ENCODE measurements at regions of chr10 and their contacts with region 1.

Region 1: GRCh38 chr10:95907456-95908253 is at the start of gene CC2D2B:
- DNase-seq: peak; percentile 46 to 63 (median 55)
- H3K4me3 ChIP-seq: peak within 1 kb of the TSS; percentile 73 to 86
- H3K4me3 Mint-ChIP-seq: peak within 1 kb of the TSS; percentile 91 to 96 (median 93)
- H3K27ac ChIP-seq: peak within 1 kb of the TSS; percentile 58
- H3K27ac Mint-ChIP-seq: peak within 1 kb of the TSS; percentile 76 to 91 (median 88)
- H3K4me1 ChIP-seq: no peaks in the 10 kb centered on the region
- H3K4me1 Mint-ChIP-seq: peaks cover 8 to 15% (median 12%) of the 10 kb centered on the region in 4 donors
- H3K27me3 ChIP-seq: no peaks in the 10 kb centered on the region
- H3K27me3 Mint-ChIP-seq: no peaks in the 10 kb centered on the region
- total RNA-seq, gene CC2D2B: 0.15 TPM in 1 of 2 experiments, not detected in the other

Region 2: GRCh38 chr10:95561182-95562075 is 346.2 kb before region 1 on chr10 and contains the start of gene SORBS1:
- CTCF ChIA-PET with region 1: no interaction called
- POLR2A ChIA-PET with region 1: no interaction called
- intact Hi-C with region 1: loop called (anchors 1 kb)
- DNase-seq: peak; percentile 85 to 92 (median 87)
- H3K4me3 ChIP-seq: peak within 1 kb of the TSS; percentile 90 to 92
- H3K4me3 Mint-ChIP-seq: peak within 1 kb of the TSS; percentile 96 to 100 (median 100)
- H3K27ac ChIP-seq: peak within 1 kb of the TSS; percentile 54
- H3K27ac Mint-ChIP-seq: peak within 1 kb of the TSS; percentile 83 to 99 (median 96)
- H3K4me1 ChIP-seq: peaks cover 10% of the 10 kb centered on the region
- H3K4me1 Mint-ChIP-seq: peaks cover 8 to 23% (median 11%) of the 10 kb centered on the region in 4 donors
- H3K27me3 ChIP-seq: no peaks in the 10 kb centered on the region
- H3K27me3 Mint-ChIP-seq: peaks cover 0 to 4% of the 10 kb centered on the region in 2 donors
- total RNA-seq, gene SORBS1: 0.67 to 0.93 TPM

Region 3: GRCh38 chr10:96043033-96043932 is 135.6 kb after region 1 on chr10 and contains the start of gene CCNJ:
- CTCF ChIA-PET with region 1: no interaction called
- POLR2A ChIA-PET with region 1: interaction called, 3 read pairs
- intact Hi-C with region 1: loop called (anchors 5 kb)
- DNase-seq: peak; percentile 77 to 87 (median 85)
- H3K4me3 ChIP-seq: peak within 1 kb of the TSS; percentile 60 to 69
- H3K4me3 Mint-ChIP-seq: peak within 1 kb of the TSS; percentile 91 to 96 (median 92)
- H3K27ac ChIP-seq: peak within 1 kb of the TSS; percentile 64
- H3K27ac Mint-ChIP-seq: peak within 1 kb of the TSS; percentile 54 to 95 (median 92)
- H3K4me1 ChIP-seq: peaks cover 19% of the 10 kb centered on the region
- H3K4me1 Mint-ChIP-seq: peaks cover 26 to 48% (median 36%) of the 10 kb centered on the region in 4 donors
- H3K27me3 ChIP-seq: no peaks in the 10 kb centered on the region
- H3K27me3 Mint-ChIP-seq: peaks cover 3 to 6% of the 10 kb centered on the region in 2 donors
- total RNA-seq, gene CCNJ: 7.1 TPM

Region 4: GRCh38 chr10:96089670-96090462 is 182.2 kb after region 1 on chr10:
- CTCF ChIA-PET with region 1: interaction called, 3 read pairs
- POLR2A ChIA-PET with region 1: interaction called, 9 read pairs
- intact Hi-C with region 1: loop called (anchors 2 kb)
- DNase-seq: peak; percentile 89 to 94 (median 91)
- H3K4me3 ChIP-seq: peak overlapping the region; percentile 71 to 88
- H3K4me3 Mint-ChIP-seq: peak overlapping the region; percentile 91 to 97 (median 96)
- H3K27ac ChIP-seq: peak overlapping the region; percentile 91
- H3K27ac Mint-ChIP-seq: peak overlapping the region; percentile 98 to 100 (median 99)
- H3K4me1 ChIP-seq: peaks cover 12% of the 10 kb centered on the region
- H3K4me1 Mint-ChIP-seq: peaks cover 5 to 11% (median 7%) of the 10 kb centered on the region in 4 donors
- H3K27me3 ChIP-seq: peaks cover 9% of the 10 kb centered on the region
- H3K27me3 Mint-ChIP-seq: peaks cover 23 to 26% of the 10 kb centered on the region in 2 donors

Region 5: DNA sequence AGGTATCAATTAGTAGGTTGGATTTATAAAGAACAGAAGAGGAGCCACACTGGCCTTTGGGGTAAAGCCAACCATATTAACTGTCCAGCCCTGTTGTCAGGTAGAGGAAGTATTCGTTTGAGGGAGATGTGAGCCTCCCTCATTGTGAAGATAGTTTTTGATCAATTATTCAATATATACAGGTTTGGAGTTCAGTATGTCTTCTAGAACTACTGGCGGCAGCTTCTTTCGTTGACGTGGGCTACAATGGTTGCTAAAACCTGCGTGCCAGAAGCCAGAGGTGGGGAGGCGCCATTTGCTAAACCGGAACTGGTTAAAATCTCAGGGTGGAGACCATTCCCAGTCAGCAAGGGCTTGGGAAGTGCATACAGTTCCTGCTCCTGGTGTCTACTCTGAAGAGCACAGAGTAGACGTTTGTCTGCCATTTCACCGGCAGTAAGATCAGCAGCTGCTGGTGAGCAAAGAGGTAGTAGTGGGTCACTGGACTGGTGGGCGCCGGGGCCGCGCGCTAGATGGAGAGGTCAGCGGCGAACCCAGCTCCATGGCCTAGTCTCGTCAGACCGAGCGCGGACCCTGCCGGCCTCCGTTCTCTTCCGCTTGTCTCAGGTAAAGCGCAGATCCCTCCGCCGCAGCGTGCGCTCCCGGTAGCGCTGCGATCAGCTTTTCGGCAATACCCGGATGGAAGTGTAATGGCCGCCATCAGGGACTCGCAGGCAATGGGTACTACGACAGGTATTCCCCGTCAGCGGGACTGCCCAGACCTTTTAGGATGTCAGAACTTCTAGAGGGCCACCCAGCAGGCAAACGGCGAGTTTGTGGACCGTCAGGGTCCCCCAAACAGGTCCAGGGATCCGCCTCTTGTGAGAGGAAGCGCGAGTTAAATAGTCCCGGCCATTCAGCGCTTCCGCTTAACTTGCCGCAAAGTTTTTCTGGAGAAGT is 222.0 kb after region 1 on chr10 and contains the start of gene ZNF518A:
- CTCF ChIA-PET with region 1: no interaction called
- POLR2A ChIA-PET with region 1: interaction called, 16 read pairs
- intact Hi-C with region 1: loop called (anchors 1 kb)
- DNase-seq: peak; percentile 90 to 95 (median 94)
- H3K4me3 ChIP-seq: peak within 1 kb of the TSS; percentile 96 to 99
- H3K4me3 Mint-ChIP-seq: peak within 1 kb of the TSS; percentile 90 to 98 (median 96)
- H3K27ac ChIP-seq: peak within 1 kb of the TSS; percentile 97
- H3K27ac Mint-ChIP-seq: peak within 1 kb of the TSS; percentile 99 to 100 (median 99)
- H3K4me1 ChIP-seq: peaks cover 17% of the 10 kb centered on the region
- H3K4me1 Mint-ChIP-seq: peaks cover 11 to 23% (median 17%) of the 10 kb centered on the region in 4 donors
- H3K27me3 ChIP-seq: peaks cover 9% of the 10 kb centered on the region
- H3K27me3 Mint-ChIP-seq: peaks cover 20 to 31% of the 10 kb centered on the region in 2 donors
- total RNA-seq, gene ZNF518A: 22.4 to 24.0 TPM

Measured in CD4-positive, alpha-beta memory T cell (primary cell).